Motor neuron (in vitro differentiated cells): ENCODE measurements at regions of chr9 and their contacts with region 1.

Region 1: DNA sequence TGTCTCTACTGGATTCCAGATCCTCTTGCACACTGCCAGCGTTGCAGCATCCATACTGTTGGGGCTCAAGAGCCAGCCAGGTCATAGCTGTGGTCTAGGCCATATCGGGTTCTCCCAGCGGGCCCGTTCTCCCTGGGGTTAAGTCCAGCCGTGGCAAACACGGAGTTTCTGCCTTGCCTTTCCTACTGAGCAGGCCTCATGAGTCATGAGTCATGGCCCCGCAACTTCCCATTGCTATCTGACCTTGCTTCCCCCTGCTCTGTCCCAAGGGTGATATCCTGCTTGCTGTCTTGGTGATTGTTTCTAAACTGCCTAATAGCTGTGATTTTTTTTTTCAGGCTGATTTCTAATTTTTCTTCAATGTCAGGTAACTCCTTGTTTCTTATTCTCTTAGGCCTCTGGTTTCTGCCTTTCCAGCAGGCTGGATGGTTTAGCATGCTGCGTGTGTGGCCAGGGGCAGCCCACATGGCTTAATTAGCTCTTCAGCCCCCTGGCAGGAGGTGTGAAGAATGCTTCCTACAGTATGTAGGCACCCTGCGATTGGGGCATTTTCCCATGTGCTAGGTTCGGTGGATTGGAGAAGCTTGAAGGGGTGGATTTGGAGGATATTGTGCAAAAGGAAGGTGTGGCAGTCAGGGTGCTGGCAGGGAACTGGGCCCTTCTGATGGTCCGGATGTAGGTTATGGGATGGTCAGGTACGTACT is 18.7 kb downstream of the DAPK1 start:
- ATAC-seq: peak in 7 of 8 experiments; percentile 7 to 95 (median 87)
- H3K4me3 ChIP-seq: no peak overlapping the region
- H3K27ac ChIP-seq: peak overlapping the region in 1 of 2 donors; percentile 19
- H3K4me1 ChIP-seq: peaks cover 12 to 30% of the 10 kb centered on the region in 2 donors

Region 2: DNA sequence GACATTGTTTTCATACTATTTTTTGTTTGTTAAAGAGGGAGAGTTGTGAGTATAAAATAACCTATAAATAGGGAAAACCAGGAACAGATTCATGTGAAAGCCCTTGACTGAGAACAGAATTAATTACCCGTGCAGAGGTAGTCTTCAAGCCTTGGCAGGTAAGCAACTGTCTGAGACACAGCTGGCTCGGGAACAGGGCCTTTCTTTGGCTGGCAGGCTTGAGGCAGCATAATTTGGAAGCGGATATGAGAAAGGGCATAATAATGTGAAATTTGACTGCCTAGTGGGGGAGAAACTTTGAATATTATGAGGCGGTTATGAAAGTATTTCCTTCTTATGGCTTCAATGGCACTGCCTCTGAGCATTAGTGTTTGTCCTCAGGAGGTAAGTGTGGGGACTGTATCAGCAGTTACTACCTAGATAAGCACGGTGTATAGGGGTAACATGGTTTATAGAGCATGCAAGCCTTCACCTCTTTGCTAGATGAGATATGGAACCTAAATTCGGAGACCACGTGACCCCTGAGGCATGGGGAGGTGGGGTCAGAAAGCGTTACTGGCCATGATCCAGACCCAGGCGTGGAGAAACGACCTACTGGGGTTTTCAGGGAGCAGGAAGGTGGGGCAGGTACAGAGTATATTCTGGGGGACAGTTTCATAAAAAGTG is 358.9 kb before region 1 on chr9:
- in situ Hi-C with region 1: no loop called
- ATAC-seq: no peak
- H3K4me3 ChIP-seq: no peak overlapping the region
- H3K27ac ChIP-seq: no peak overlapping the region
- H3K4me1 ChIP-seq: no peaks in the 10 kb centered on the region

Region 3: DNA sequence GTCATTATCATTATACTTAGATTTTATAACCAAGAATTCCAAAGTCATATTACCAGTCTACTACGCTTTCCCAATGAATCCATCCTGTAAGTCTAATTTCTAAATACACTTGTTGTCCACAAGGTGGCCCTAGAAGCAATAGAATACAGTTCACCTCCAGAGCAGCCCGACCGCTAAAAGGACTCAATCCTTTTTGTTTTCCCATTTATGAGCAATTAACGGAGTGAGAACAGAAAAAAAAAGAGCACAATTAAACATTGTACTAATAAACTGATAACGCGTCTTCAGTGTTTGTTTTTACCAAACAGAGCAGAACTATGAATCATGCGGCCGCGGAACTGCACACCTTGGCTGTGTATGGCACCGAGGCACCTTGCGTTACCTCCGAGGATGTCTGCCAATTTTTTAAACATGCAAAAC is 179.4 kb before region 1 on chr9:
- in situ Hi-C with region 1: loop called in 1 of 9 experiments (anchors 25 kb)
- ATAC-seq: peak; percentile 54 to 78 (median 66)
- H3K4me3 ChIP-seq: peak overlapping the region; percentile 21 to 38 (median 37)
- H3K27ac ChIP-seq: no peak overlapping the region
- H3K4me1 ChIP-seq: peaks cover 14 to 17% of the 10 kb centered on the region in 2 donors